Right lobe of liver (tissue), 6 donors: ENCODE measurements at regions of chr19 and their contacts with region 1.

Region 1: DNA sequence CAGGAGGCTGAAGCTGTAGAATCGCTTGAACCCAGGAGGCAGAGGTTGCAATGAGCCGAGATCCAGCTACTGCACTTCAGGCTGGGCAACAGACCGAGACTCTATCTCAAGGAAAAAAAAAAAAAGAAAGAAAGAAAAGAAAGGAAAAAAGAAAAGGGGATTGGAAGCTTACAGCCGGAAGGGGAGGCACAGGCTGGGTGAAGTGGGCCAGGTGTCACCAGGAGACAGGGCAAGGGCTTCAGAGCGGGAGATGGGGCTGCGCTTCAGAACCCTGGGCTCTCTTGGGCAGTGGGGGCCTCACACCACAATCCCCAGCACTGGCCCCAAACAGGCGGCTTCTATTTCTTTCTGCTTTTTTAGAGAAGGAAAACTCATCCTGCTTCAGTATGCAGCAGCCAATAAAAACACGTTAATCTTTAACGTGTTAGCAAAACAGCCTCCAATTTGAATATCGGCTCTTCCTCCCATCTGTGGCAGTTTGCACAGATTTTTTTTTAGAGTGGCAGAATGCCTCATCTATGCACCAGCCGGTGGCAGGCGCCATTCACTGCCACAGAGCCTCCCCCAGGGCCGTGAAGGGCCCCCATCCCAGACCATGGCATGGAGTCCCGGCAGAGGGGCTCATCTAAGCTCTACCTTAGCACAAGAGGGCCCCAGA is 46.6 kb upstream of the C19orf12 start:
- DNase-seq: no peak
- ATAC-seq: no peak
- H3K4me3 ChIP-seq: no peak overlapping the region
- H3K27ac ChIP-seq: no peak overlapping the region
- H3K4me1 ChIP-seq: no peaks in the 10 kb centered on the region
- H3K27me3 ChIP-seq: no peaks in the 10 kb centered on the region
- CTCF ChIP-seq: no peak
- POLR2A ChIP-seq: no peak

Region 2: DNA sequence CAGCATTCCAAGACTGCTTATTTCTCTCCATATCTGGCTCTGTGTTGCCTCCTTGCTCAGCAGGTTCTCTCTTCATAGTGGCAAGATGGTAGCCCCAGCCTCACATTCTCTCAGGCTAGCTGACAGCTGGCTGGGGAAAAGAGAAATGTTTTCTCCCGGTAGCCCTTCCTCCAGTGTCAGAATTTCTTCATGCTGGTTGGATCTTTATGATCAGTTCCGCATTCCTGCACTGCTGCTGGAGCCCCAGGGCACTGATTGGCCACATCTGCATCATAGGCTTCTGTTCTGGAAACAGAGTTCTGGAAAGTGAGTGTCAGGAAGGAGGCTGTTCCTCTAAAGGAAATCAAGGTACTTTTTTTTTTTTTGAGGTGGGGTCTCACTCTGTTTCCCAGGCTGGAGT is 131.0 kb before region 1 on chr19:
- intact Hi-C with region 1: no loop called
- DNase-seq: no peak
- ATAC-seq: no peak
- H3K4me3 ChIP-seq: no peak overlapping the region
- H3K27ac ChIP-seq: no peak overlapping the region
- H3K4me1 ChIP-seq: no peaks in the 10 kb centered on the region
- H3K27me3 ChIP-seq: no peaks in the 10 kb centered on the region
- CTCF ChIP-seq: no peak
- POLR2A ChIP-seq: no peak

Region 3: DNA sequence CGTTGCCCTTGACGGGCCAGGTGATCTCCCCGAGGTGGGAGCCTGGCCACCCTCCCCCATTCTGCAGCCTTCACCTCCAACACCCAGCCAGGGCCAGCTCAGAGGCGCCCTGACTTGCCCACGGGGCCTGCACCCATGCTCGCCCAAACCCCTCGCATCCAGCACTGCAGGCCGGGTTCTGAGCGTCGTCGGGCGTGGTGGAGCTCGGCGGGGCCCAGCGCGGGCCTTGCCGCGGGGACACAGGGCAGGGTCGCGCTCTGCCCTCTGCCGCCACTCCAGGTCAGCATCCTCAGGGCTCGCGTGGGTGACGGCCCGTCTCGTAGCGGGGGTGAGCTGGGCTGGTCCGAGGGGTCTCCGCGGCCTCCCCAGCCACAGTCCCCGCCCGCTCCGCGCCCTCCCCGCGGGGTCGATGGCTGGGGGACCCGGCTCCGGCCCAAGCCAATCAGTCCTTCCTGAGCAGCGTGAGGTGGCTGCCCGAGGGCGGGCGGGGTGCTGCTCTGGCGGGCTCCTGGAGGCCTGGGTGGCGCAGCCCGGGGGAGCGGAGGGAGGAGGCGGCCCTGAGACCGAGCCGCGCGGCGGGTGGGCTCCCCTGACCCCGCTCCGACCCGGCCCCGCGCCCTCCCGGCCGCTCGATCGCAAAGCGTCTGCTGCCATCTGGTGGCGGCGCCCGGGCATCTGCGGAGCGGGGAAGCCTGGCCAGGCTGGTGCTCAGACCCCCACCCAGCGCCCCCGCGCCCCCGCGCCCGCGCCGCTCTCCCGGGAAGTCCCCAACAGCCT is 111.5 kb after region 1 on chr19:
- intact Hi-C with region 1: loop called (anchors 10 kb)
- DNase-seq: peak in 2 of 3 donors; percentile 54 to 60
- ATAC-seq: peak; percentile 66 to 83 (median 76)
- H3K4me3 ChIP-seq: peak overlapping the region; percentile 33 to 46 (median 36)
- H3K27ac ChIP-seq: no peak overlapping the region
- H3K4me1 ChIP-seq: peaks cover 0 to 10% (median 0%) of the 10 kb centered on the region in 4 donors
- H3K27me3 ChIP-seq: no peaks in the 10 kb centered on the region
- CTCF ChIP-seq: peak; percentile 81 to 90 (median 84)
- POLR2A ChIP-seq: no peak

Region 4: DNA sequence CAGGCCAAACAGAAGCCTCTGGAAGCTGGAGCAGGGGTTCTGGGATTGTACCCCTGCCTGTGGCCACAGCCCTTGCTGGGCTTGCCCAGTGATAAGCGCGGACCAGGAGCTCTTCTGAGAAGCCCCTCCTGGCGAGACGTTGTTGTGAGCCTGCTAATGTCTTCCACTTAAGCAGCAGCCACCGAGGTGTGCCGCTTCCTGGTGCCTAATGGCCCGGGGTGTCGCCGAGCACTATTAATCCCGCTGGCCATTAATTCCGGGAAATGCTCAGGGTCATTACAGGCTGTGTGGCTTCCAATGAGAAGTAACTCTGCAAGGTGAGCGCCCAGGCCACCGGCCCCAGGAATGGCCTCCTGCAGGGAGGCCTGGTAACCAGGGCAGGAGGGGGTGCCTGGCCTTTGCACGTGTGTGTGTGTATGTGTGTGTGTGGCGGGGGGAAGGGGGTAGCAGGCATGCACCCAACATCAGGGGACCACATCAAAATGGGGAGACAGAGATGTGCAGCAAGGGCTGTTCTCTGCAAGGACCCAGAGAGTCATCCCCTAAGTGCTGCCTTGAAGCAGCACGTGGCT is 355.4 kb after region 1 on chr19:
- intact Hi-C with region 1: no loop called
- DNase-seq: no peak
- ATAC-seq: no peak
- H3K4me3 ChIP-seq: no peak overlapping the region
- H3K27ac ChIP-seq: no peak overlapping the region
- H3K4me1 ChIP-seq: no peaks in the 10 kb centered on the region
- H3K27me3 ChIP-seq: no peaks in the 10 kb centered on the region
- CTCF ChIP-seq: no peak
- POLR2A ChIP-seq: no peak